ENCODE measurements at regions of chr2 and their contacts with region 1.

Region 1: GRCh38 chr2:101328474-101329007 is 20.0 kb upstream of the RNF149 start:
- DNase-seq: peak; percentile 52
- H3K27ac ChIP-seq: no peak overlapping the region
- CTCF ChIP-seq: no peak

Region 2: GRCh38 chr2:101001691-101002561 is 326.6 kb before region 1 on chr2 and contains the start of gene RPL31:
- CTCF ChIA-PET with region 1: no interaction called
- POLR2A ChIA-PET with region 1: no interaction called
- DNase-seq: peak; percentile 99
- H3K27ac ChIP-seq: peak within 1 kb of the TSS; percentile 83
- CTCF ChIP-seq: no peak

Region 3: DNA sequence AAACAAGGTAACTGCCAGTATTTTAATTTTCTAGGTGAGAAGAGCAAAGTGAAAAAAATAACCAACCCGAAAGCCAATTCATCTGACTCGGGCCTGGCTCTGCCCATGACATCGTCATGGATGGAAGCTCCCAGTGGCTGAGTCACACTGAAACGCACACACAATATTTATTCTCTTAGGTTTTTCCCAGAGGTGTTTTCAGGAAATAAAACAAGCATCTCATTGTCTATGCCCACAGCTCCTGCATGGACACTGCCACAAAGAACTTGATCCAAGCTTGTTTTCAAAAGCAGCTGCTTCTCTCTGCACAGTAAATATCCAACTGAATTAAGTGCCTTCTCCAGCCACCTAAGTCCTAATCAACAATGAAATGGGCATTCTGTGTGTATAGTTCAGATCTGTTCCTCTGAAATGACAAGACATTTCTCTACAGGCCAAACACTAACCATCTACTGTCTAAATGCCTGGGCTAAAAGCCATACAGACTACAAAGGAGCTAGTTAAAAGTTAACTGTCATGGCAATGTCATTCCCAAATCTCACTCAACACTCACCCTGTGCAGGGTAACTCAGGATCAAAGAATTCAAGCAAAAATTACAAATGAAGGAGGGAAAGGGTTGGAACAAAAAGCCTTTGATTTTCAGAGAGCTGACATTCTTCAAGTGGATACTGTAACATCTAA is 263.5 kb before region 1 on chr2:
- CTCF ChIA-PET with region 1: no interaction called
- POLR2A ChIA-PET with region 1: no interaction called
- DNase-seq: peak; percentile 77
- H3K27ac ChIP-seq: no peak overlapping the region
- CTCF ChIP-seq: no peak

Region 4: DNA sequence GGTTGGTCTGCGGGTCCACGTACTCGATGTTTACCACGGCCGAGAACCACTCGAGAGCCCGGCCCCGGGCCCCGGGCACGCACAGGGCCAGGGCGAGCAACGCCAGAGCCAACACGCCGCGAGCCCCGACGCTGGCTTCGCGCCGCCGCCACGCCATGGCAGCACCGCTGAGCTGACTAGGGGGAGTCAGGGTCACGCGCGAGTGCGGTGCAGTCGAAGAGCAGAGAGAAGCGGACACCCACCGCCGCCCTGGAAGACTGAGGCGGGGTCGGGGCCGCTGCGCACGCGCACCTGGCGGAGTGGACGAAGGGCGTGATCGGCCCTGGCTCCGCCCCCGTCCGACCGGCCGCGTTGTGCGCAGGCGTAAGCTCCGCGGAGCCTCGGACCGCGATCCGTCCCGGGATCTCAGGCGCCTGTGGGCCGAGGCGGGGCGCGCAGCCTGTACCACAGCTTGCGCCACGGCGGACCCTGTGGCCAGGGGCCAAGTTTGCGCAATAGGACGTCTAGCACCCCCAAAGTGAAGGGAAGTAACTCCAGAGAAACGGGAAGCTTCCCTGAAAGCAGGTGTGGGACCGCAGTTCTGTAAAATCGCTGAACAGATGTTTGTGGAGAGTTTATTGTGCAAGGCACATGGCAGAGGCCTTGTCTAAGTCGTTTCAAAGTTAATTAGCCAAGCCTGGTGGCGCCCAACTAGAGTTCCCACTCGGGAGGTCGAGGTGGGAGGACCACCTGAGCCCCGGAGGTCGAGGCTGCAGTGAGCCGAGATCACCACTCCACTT is 19.9 kb before region 1 on chr2 and contains the start of gene RNF149:
- CTCF ChIA-PET with region 1: no interaction called
- POLR2A ChIA-PET with region 1: interaction called, 11 read pairs
- DNase-seq: peak; percentile 100
- H3K27ac ChIP-seq: peak within 1 kb of the TSS; percentile 85
- CTCF ChIP-seq: no peak

Measured in RWPE1 (cell line).